Left ventricle myocardium superior (tissue), 1 donor: ENCODE measurements at regions of chrX and their contacts with region 1.

Region 1: DNA sequence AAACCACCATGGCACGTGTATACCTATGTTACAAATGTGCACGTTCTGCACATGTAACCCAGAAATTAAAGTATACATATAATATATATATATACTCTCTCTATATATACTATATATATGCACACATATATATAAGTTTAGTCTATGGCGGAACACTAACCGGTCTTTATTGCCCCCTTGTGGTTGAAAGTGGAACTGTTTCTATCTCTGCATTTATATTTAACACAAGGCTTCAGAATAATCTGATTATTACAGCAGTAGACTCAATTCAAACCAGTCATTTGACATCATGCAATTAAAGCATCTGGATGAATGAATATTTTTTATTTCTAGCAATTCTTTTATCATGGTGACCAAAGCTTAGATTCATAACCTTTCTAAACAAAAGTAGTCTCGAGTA is 14.6 kb downstream of the RAB9B start:
- DNase-seq: no peak
- ATAC-seq: no peak

Region 2: DNA sequence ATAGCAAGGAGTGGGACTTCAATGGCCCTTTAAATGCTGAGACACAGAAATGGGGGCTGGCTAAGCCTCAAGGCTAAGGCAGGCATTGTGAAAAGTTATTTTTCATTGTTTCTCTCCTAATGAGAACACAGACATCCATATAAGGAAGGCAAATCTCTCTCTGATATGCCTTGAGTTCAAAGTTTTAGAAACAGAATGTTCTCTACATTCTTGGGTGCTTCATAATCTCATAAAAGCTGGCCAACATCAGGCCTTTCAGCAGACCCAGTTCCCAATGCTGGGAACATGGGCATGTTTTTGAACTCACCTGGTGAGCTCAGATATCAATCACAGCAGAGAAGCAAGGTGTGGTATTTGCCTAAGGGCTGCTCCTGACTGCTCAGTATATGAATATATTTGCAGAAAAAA is 278.8 kb before region 1 on chrX:
- intact Hi-C with region 1: loop called (anchors 5 kb)
- DNase-seq: no peak
- ATAC-seq: no peak

Region 3: GRCh38 chrX:103999234-103999633 is 181.7 kb after region 1 on chrX:
- intact Hi-C with region 1: no loop called
- DNase-seq: no peak
- ATAC-seq: no peak